Heart left ventricle (tissue), 16 donors: ENCODE measurements at regions of chr10 and their contacts with region 1.

Region 1: GRCh38 chr10:15106352-15107013 is 9.3 kb downstream of the RPP38 start:
- DNase-seq: peak; percentile 48 to 74 (median 54)
- ATAC-seq: peak; percentile 52 to 89 (median 86)
- H3K4me3 ChIP-seq: no peak overlapping the region
- H3K27ac ChIP-seq: no peak overlapping the region
- H3K4me1 ChIP-seq: peaks cover 0 to 6% (median 0%) of the 10 kb centered on the region in 12 donors
- H3K27me3 ChIP-seq: no peaks in the 10 kb centered on the region
- CTCF ChIP-seq: peak; percentile 72 to 93 (median 84)
- POLR2A ChIP-seq: no peak

Region 2: GRCh38 chr10:14500172-14500765 is 606.2 kb before region 1 on chr10:
- intact Hi-C with region 1: loop called in 3 of 10 experiments (anchors 2 to 10 kb)
- DNase-seq: no peak
- ATAC-seq: no peak
- H3K4me3 ChIP-seq: no peak overlapping the region
- H3K27ac ChIP-seq: no peak overlapping the region
- H3K4me1 ChIP-seq: peaks cover 0 to 9% (median 0%) of the 10 kb centered on the region in 12 donors
- H3K27me3 ChIP-seq: no peaks in the 10 kb centered on the region
- CTCF ChIP-seq: no peak
- POLR2A ChIP-seq: no peak

Region 3: DNA sequence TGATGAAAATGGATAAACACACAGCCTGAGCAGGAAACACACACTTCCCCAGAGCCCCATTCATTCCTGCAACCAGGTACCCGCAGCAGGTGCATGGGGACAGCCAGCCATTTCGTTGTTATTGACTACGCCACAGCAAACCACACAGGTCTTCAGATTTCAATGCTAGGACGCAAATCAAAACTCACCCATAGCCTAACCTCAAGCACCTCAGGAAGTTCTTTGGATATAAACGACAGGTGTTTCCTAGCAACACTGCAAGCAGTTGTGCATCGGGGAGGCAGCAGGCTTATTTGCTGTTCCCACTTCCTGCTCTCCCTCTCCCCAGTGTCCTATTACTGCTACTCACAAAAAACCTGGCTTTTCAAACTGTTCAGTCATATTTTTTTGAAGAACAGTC is 599.3 kb before region 1 on chr10:
- intact Hi-C with region 1: loop called in 1 of 10 experiments (anchors 10 kb)
- DNase-seq: no peak
- ATAC-seq: no peak
- H3K4me3 ChIP-seq: no peak overlapping the region
- H3K27ac ChIP-seq: no peak overlapping the region
- H3K4me1 ChIP-seq: no peaks in the 10 kb centered on the region
- H3K27me3 ChIP-seq: no peaks in the 10 kb centered on the region
- CTCF ChIP-seq: no peak
- POLR2A ChIP-seq: no peak

Region 4: DNA sequence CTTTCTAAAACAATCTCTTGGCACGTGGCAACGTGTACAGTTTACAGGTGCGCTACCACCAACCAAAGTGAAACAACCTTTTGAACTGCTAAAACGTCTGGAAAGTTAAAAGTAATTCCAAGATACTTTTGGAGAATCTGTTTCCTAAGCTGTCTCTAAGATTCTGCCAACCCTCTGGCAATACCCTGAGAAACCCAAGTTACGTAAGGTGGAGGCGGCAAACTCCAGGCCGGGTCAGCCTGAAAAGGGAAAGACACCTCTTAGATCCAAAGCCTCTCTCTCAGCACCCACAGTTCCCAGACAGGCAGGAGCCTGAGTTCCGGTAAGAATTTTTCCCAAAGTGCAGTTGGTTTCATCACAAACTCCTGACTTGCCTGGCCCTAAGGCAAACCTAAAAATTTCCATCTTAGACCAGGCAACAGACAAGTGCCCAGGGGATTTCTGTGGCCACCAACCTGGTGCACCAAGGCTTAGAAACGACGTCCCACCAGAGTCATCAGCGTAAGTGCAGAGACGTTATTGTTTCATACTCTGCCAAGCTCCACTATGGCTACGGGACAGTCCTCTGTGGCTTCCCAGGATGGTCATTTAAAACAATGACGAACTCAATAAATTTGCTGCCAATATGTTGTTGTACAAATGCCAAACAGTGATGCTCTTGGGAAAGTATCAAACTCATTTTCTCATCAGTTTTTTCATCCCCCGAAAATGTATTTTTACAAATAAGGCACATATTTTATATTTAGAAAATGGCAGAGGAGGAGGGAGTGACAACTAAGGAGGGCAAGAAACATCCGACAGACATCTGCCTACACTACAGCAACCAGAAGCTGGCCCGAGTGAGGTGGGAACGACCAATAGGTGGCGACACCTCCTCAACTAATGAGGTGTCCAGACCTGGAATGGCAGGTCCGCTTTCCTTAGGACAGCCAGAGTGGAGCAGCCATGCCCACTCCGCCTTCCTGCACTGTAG is 570.0 kb before region 1 on chr10:
- intact Hi-C with region 1: loop called in 5 of 10 experiments (anchors 5 to 10 kb)
- DNase-seq: peak; percentile 72 to 86 (median 75)
- ATAC-seq: peak; percentile 81 to 96 (median 90)
- H3K4me3 ChIP-seq: no peak overlapping the region
- H3K27ac ChIP-seq: peak overlapping the region in 2 of 12 donors; percentile 45 to 56
- H3K4me1 ChIP-seq: peaks cover 0 to 24% (median 4%) of the 10 kb centered on the region in 12 donors
- H3K27me3 ChIP-seq: no peaks in the 10 kb centered on the region
- CTCF ChIP-seq: peak; percentile 43 to 80 (median 63)
- POLR2A ChIP-seq: no peak

Region 5: DNA sequence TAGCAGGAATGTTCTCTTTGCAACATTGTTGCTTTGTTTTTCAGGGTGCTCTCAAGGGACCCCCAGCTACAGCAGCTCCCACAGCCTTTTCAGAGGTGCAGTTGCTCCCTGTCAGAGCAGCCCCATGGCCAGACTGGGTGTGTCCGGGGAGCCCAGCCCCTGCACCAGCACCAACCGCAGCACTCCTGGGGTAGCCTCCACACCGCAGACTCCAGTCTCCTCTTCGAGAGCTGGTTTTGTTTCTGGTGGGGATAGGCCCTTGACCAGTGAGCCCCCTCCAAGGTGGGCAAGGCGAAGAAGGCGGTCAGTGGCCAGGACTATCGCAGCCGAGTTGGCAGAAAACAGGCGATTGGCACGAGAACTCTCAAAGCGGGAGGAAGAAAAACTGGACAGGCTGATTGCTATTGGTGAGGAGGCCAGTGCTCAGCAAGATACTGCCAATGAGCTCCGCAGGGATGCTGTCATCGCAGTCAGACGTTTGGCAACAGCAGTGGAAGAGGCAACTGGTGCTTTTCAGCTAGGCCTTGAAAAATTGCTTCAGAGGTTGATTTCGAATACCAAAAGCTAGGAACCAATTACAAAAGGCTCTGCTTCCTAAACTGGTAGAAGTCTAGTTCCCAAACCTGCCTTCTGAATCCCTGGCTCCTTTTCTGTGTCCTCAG is 263.0 kb before region 1 on chr10:
- intact Hi-C with region 1: loop called in 1 of 10 experiments (anchors 10 kb)
- DNase-seq: no peak
- ATAC-seq: no peak
- H3K4me3 ChIP-seq: no peak overlapping the region
- H3K27ac ChIP-seq: no peak overlapping the region
- H3K4me1 ChIP-seq: peaks cover 0 to 14% (median 9%) of the 10 kb centered on the region in 12 donors
- H3K27me3 ChIP-seq: no peaks in the 10 kb centered on the region
- CTCF ChIP-seq: no peak
- POLR2A ChIP-seq: no peak

Region 6: DNA sequence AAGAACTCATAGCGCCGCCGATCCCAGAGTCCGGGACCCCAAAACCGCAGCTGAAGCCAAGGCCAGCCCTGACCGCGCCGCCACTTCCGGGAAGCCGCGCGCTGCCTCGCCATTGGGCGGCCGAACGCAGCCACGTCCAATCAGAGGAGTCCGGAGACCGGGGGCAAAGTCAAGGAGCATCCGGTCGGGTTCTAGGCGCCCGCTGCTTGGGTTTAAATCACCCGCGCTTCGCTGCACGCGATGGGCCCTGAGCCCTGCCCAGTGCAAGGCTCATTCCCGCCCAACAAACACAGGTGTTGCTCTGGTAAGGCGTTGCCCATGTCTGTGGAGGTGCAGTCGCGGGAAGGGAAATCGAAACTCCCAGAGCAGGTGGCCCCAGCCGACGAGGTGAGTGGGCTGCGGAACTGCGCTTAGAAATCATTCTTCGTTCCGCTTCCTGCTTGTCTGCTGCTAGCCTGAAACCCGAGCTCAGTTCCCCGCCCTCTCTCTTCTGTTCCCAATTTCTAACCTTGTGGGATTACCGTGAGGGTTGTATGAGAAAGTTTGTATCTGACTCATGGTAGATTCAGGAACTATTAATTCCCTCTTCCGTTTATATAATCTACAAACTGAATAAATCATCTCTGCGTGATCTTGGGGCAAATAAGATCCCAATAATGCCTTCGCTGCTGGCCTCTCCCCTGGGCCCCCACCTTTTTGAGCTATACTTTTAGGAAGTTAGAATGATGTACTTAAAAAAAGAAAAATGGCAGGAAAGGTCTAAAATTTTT is 152.3 kb before region 1 on chr10 and contains the start of gene DCLRE1C:
- intact Hi-C with region 1: loop called in 1 of 10 experiments (anchors 5 kb)
- DNase-seq: peak; percentile 90 to 94 (median 92)
- ATAC-seq: peak; percentile 96 to 99 (median 98)
- H3K4me3 ChIP-seq: peak within 1 kb of the TSS; percentile 69 to 95 (median 80)
- H3K27ac ChIP-seq: peak within 1 kb of the TSS; percentile 33 to 91 (median 85)
- H3K4me1 ChIP-seq: peaks cover 0 to 37% (median 18%) of the 10 kb centered on the region in 12 donors
- H3K27me3 ChIP-seq: no peaks in the 10 kb centered on the region
- CTCF ChIP-seq: peak in 1 of 12 donors; percentile 6
- POLR2A ChIP-seq: peak in 1 of 2 donors; percentile 40
- total RNA-seq, gene DCLRE1C: 2.5 to 9.6 (median 5.3) TPM

Region 7: DNA sequence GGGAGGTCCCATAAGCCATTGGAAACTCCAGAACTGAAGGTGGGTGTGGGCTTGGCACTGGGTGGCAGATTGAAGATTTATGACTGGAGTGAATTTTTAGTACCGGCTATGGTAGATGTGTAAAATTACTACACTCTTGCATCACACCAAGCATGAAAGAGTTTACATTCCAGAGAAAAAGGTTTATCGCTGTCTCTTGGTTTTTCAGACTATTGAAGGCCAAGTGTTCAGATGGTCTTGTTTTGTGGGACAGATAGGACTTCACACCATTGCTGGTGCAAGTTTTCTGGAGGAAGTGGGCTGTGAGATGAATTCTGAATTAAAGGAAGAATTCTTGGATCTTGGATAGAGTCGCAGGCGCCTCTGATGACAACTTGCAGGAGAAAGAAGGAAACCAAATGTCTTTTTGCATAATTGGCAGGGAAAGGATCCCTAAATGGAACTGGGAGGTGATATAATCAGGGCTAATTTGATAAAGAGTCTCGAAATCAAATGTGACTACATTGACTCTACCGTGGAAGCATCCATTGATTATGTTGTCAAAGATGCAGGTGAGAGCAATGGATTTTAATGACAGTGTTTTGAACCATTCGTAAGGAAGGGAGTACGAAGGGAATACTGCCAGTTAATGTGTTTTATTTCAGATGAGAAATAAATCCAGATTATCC is 76.2 kb after region 1 on chr10:
- intact Hi-C with region 1: no loop called
- DNase-seq: no peak
- ATAC-seq: peak in 1 of 4 donors; percentile 16
- H3K4me3 ChIP-seq: peak overlapping the region in 2 of 12 donors; percentile 12 to 40
- H3K27ac ChIP-seq: peak overlapping the region in 1 of 12 donors; percentile 1
- H3K4me1 ChIP-seq: no peaks in the 10 kb centered on the region
- H3K27me3 ChIP-seq: no peaks in the 10 kb centered on the region
- CTCF ChIP-seq: no peak
- POLR2A ChIP-seq: no peak

Region 8: DNA sequence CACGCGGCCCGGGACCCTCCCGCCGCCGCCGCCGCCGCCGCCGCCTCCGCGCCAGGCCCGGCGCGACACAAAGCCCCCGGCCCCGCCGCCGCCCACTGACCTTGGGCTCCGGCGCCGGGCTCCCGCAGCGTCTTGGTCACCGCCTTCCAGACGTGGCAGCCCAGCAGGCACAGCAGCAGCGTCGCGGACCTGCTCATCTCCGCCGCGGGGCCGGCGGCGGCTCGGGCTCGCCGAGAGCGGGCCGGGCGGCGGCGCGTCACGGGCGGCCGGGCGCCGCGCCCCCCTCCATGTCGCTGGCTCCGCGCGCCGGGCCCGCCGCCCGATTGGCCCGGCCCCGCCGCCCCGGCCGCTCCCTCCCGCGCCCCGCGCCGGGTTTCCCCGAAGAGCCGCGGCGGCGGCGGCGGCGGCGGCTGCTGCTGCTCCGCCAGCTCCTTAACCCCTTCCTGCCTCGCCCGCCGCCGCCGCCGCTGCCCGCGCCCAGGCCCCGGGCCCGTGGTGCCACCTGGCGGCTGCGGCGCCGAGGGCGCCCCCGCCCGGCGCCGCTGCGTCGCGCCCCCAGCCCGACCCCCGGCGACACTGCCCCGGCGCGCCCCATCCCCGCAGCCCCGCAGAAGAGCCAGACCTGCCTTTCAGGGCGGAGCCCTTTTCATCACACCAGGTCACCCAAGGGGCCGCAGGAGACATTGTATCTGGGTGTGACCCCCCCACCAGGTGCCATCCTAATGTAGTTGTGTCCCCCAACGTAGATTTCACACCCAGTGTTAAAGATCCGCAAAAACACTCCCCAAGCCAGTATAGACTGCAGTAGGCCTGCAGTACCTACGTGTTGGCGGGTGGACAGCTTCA is 264.6 kb after region 1 on chr10 and contains the start of gene FAM171A1:
- intact Hi-C with region 1: loop called in 1 of 10 experiments (anchors 10 kb)
- DNase-seq: peak; percentile 45 to 81 (median 61)
- ATAC-seq: peak; percentile 19 to 83 (median 68)
- H3K4me3 ChIP-seq: peak within 1 kb of the TSS; percentile 56 to 91 (median 69)
- H3K27ac ChIP-seq: peak within 1 kb of the TSS in 11 of 12 donors; percentile 51 to 83 (median 64)
- H3K4me1 ChIP-seq: peaks cover 0 to 22% (median 2%) of the 10 kb centered on the region in 12 donors
- H3K27me3 ChIP-seq: peaks cover 0 to 39% (median 0%) of the 10 kb centered on the region in 9 donors
- CTCF ChIP-seq: peak in 4 of 12 donors; percentile 20 to 31 (median 28)
- POLR2A ChIP-seq: no peak
- total RNA-seq, gene FAM171A1: 6.7 to 18.0 (median 9.9) TPM